ENCODE measurements at regions of chr9 and their contacts with region 1.

Region 1: GRCh38 chr9:137240861-137241489 is at the start of gene TUBB4B:
- DNase-seq: peak; percentile 98 to 100
- H3K4me3 ChIP-seq: peak within 1 kb of the TSS; percentile 97
- H3K27ac ChIP-seq: peak within 1 kb of the TSS; percentile 82
- H3K4me1 ChIP-seq: peaks cover 39% of the 10 kb centered on the region
- H3K27me3 ChIP-seq: no peaks in the 10 kb centered on the region
- CTCF ChIP-seq: no peak
- total RNA-seq, gene TUBB4B: 441 and 494 TPM in 2 replicates

Region 2: GRCh38 chr9:136790927-136791641 is 449.9 kb before region 1 on chr9 and contains the start of gene TMEM141:
- CTCF ChIA-PET with region 1: no interaction called
- POLR2A ChIA-PET with region 1: interaction called, 3 read pairs
- intact Hi-C with region 1: loop called (anchors 5 kb)
- DNase-seq: peak; percentile 94 to 100
- H3K4me3 ChIP-seq: peak within 1 kb of the TSS; percentile 68
- H3K27ac ChIP-seq: peak within 1 kb of the TSS; percentile 79
- H3K4me1 ChIP-seq: peaks cover 15% of the 10 kb centered on the region; the same call in 1 of the 2 replicates
- H3K27me3 ChIP-seq: no peaks in the 10 kb centered on the region
- CTCF ChIP-seq: no peak
- total RNA-seq, gene TMEM141: 83.6 and 124 TPM in 2 replicates

Region 3: DNA sequence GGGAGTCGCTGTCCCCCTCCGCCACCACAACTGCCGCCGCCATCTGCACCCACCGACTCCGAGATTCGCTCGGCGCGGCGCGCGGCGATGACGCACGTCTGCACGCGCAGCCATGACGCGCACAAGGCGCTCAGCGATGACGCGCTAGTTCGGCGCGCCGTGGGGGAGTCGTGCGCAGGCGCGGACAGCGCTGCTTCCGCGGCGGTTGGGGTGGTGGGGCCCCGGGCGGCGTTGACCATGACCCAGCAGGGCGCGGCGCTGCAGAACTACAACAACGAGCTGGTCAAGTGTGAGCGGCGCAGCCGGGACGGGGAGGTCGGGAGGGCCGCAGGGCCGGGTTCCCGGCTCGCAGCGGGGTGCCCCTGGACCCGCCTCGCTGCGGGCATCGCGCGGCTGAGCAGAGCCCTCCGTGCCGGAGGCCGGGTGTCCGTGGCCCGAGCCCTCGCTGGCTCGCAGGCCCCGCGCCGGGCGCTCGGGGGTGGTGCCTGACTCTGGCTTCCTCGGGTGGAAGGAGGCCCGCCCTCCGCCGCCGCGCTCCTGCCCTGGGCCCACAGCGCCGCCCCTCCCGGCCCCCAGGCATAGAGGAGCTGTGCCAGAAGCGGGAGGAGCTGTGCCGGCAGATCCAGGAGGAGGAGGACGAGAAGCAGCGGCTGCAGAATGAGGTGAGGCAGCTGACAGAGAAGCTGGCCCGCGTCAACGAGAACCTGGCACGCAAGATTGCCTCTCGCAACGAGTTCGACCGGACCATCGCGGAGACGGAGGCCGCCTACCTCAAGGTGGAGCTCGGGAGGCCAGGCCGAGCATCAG is 52.3 kb before region 1 on chr9 and contains the starts of genes ANAPC2 and SSNA1:
- CTCF ChIA-PET with region 1: interaction called, 3 read pairs
- POLR2A ChIA-PET with region 1: interaction called, 14 read pairs
- intact Hi-C with region 1: no loop called
- DNase-seq: peak; percentile 81 to 98
- H3K4me3 ChIP-seq: peak within 1 kb of the TSS; percentile 97
- H3K27ac ChIP-seq: peak within 1 kb of the TSS; percentile 74
- H3K4me1 ChIP-seq: peaks cover 33% of the 10 kb centered on the region
- H3K27me3 ChIP-seq: no peaks in the 10 kb centered on the region
- CTCF ChIP-seq: peak; percentile 44; the same call in 1 of the 2 replicates
- total RNA-seq, gene ANAPC2: 92.1 and 95.4 TPM in 2 replicates
- total RNA-seq, gene SSNA1: 98.7 and 109 TPM in 2 replicates

Region 4: DNA sequence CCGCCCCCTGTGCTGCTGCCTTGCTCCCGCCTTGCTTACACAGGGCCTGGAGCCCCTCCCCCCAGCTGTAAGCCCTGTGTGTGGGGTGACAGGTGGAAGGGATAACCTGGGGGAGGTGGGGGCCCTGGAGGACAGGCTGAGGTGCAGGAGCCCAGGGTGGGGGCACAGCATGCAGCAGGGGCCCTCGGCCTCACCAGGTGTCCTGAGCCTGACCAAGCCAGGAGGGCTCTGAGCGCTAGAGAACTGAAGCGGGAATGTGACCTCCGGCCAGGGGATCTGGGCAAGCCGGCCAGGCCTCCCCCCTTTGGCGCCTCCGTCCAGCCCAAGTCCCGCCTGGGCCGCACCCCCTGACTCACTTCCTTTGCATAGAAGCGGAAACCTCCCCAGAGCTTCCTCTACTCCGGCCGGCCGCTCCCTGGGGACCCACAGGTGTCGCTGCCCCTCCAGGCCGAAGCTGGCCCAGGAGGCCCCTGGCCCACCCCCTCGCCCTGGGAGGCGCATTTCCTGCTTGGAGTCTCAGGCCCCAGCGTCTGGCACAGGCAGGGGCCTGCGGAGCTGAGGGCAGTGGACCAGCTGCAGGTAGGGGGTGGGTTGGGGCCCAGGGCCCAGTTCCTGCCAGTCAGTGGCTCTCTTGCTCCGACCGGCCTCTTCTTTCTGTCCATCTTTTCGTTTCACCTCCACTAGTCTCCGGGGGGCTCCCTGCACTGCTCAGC is 36.5 kb after region 1 on chr9 and contains the start of gene TOR4A:
- CTCF ChIA-PET with region 1: interaction called, 10 read pairs
- POLR2A ChIA-PET with region 1: interaction called, 9 read pairs
- intact Hi-C with region 1: loop called (anchors 2 kb)
- DNase-seq: peak; percentile 90 to 98
- H3K4me3 ChIP-seq: peak within 1 kb of the TSS; percentile 89
- H3K27ac ChIP-seq: peak within 1 kb of the TSS; percentile 60
- H3K4me1 ChIP-seq: peaks cover 16% of the 10 kb centered on the region
- H3K27me3 ChIP-seq: no peaks in the 10 kb centered on the region
- CTCF ChIP-seq: no peak; the same call in 1 of the 2 replicates
- total RNA-seq, gene TOR4A: 48.9 and 59.9 TPM in 2 replicates

Region 5: DNA sequence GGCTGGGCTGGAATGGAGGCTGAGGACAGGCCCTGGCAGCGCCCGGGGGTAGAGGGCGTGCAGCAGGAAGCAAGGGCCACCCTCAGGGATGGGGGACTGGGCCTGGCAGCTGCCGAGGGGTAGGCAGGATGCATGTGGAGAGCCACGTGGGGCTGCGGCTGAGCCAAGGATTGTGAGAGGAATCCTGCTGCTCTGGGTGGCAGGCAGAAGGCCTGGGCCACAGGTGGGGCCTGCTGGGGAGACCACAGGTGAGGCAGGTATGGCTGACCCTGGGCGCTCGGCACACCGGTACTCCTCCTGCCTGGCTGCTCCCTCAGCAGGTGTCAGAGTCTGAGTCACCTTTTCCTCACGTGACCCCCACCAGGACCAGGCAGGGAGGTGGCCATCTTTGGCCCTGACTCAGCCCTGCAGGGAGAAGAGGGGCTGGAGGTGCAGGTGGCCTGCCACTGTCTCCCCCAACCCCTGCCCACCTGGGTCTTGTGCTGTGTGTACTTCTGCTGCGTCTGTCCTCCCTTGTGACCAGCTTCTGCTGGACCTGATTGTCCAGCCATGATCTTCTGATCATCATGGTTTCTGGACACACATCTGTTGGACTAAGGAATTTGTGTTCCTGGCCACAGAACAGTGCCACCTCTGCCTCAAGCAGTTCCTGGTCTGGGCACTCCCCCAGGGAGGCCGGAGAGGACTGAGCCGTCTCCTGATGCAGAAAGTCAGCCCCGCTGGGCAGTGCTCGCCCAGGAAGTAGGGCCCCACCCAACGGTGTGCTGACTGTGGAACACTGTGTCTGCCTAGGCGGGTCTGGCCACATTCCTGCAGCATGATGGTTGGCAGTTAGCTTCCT is 370.9 kb after region 1 on chr9:
- CTCF ChIA-PET with region 1: no interaction called
- POLR2A ChIA-PET with region 1: no interaction called
- intact Hi-C with region 1: loop called (anchors 5 kb)
- DNase-seq: peak; percentile 99
- H3K4me3 ChIP-seq: peak overlapping the region; percentile 44; the same call in 1 of the 2 replicates
- H3K27ac ChIP-seq: peak overlapping the region; percentile 97
- H3K4me1 ChIP-seq: peaks cover 76% of the 10 kb centered on the region
- H3K27me3 ChIP-seq: no peaks in the 10 kb centered on the region
- CTCF ChIP-seq: no peak

Measured in PC-9 (cell line).